ENCODE measurements at regions of chr4 and their contacts with region 1.

Region 1: DNA sequence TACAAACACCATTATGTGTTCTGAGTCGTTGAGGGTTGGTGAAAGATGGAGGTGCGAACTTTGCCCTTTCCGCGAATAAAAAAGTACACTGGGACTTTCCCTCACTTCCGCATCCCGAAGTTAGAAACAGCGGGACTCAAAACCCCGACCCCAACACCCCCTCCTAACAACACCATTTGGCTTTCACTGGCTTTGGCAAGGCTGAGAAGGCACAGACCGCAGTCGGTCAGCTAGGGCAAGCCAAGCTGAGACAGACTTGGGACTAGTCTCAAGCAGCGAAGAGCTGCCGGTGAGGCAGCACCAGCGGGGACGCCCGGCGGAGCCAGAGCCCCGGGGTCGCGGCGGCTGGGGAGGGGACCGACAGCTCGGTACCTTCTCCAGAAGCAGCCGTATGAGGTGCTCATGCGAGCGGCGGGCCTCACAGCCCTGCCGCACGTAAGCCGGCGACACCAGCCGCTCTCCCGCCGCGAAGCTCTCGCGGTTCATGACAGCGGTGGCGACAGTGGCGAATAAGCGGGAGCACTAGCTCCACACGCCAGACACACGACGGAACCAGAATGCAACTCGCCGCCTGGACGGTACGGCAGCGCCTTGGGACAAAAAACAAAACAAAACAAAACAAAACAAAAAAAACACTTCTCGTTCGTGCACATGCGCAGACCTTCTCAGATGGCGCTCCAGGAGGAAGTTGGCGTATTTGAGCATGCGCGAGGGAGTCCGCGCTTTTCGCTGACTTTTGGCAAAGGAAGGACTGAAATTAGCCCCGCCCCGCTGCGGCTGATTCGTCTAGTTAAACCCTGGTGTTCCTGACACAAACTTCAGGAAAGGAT is at the start of gene SEPSECS:
- DNase-seq: peak; percentile 96
- ATAC-seq: peak; percentile 91
- H3K4me3 ChIP-seq: peak within 1 kb of the TSS; percentile 76 to 93
- H3K27ac ChIP-seq: peak within 1 kb of the TSS; percentile 94
- H3K4me1 ChIP-seq: peaks cover 13 to 21% of the 10 kb centered on the region in 2 experiments
- H3K27me3 ChIP-seq: no peaks in the 10 kb centered on the region
- CTCF ChIP-seq: no peak
- POLR2A ChIP-seq: peak; percentile 90
- RAD21 ChIP-seq: no peak
- total RNA-seq, gene SEPSECS: 10.6 TPM

Region 2: GRCh38 chr4:25144870-25145481 is 15.1 kb before region 1 on chr4:
- CTCF ChIA-PET with region 1: interaction called, 3 read pairs
- POLR2A ChIA-PET with region 1: interaction called, 11 read pairs
- RAD21 ChIA-PET with region 1: no interaction called
- intact Hi-C with region 1: no loop called
- DNase-seq: peak; percentile 24
- ATAC-seq: peak; percentile 55; the same call in 1 of the 2 replicates
- H3K4me3 ChIP-seq: no peak overlapping the region
- H3K27ac ChIP-seq: no peak overlapping the region
- H3K4me1 ChIP-seq: no peaks in the 10 kb centered on the region
- H3K27me3 ChIP-seq: no peaks in the 10 kb centered on the region
- CTCF ChIP-seq: peak; percentile 31 to 68 (median 66); a peak in 5 of 6 replicates
- POLR2A ChIP-seq: no peak
- RAD21 ChIP-seq: peak; percentile 46; the same call in 1 of the 2 replicates